ENCODE measurements at regions of chr6 and their contacts with region 1.

Region 1: GRCh38 chr6:46704562-46704961 is 16.9 kb downstream of the TDRD6 start:
- DNase-seq: no peak
- ATAC-seq: peak; percentile 36
- H3K4me3 Mint-ChIP-seq: no peak overlapping the region
- H3K27ac Mint-ChIP-seq: no peak overlapping the region
- H3K4me1 Mint-ChIP-seq: no peaks in the 10 kb centered on the region
- H3K27me3 Mint-ChIP-seq: peaks cover 28% of the 10 kb centered on the region

Region 2: GRCh38 chr6:46606338-46606737 is 98.2 kb before region 1 on chr6:
- CTCF ChIA-PET with region 1: no interaction called
- POLR2A ChIA-PET with region 1: no interaction called
- intact Hi-C with region 1: no loop called
- DNase-seq: no peak
- ATAC-seq: no peak
- H3K4me3 Mint-ChIP-seq: no peak overlapping the region
- H3K27ac Mint-ChIP-seq: no peak overlapping the region
- H3K4me1 Mint-ChIP-seq: no peaks in the 10 kb centered on the region
- H3K27me3 Mint-ChIP-seq: peaks cover 5% of the 10 kb centered on the region

Region 3: DNA sequence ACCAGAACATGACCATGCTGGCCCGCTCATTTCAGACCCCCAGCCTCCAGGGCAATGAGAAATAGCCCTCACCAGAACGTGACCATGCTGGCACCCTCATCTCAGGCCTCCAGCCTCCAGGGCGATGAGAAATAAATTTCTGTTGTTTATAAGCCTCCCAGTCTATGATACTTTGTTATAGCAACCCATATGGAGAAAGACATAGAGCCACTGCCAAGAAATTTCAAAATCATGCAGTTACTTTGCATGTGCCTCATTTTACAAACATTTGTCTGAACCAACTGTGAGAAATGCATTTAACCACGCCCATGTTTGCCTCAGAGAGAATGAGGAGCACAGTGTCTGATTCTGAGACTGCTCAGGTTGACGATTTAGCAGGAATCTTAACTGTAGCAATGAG is 67.4 kb before region 1 on chr6:
- CTCF ChIA-PET with region 1: no interaction called
- POLR2A ChIA-PET with region 1: no interaction called
- intact Hi-C with region 1: no loop called
- DNase-seq: no peak
- ATAC-seq: no peak
- H3K4me3 Mint-ChIP-seq: no peak overlapping the region
- H3K27ac Mint-ChIP-seq: no peak overlapping the region
- H3K4me1 Mint-ChIP-seq: no peaks in the 10 kb centered on the region
- H3K27me3 Mint-ChIP-seq: peaks cover 16% of the 10 kb centered on the region

Region 4: DNA sequence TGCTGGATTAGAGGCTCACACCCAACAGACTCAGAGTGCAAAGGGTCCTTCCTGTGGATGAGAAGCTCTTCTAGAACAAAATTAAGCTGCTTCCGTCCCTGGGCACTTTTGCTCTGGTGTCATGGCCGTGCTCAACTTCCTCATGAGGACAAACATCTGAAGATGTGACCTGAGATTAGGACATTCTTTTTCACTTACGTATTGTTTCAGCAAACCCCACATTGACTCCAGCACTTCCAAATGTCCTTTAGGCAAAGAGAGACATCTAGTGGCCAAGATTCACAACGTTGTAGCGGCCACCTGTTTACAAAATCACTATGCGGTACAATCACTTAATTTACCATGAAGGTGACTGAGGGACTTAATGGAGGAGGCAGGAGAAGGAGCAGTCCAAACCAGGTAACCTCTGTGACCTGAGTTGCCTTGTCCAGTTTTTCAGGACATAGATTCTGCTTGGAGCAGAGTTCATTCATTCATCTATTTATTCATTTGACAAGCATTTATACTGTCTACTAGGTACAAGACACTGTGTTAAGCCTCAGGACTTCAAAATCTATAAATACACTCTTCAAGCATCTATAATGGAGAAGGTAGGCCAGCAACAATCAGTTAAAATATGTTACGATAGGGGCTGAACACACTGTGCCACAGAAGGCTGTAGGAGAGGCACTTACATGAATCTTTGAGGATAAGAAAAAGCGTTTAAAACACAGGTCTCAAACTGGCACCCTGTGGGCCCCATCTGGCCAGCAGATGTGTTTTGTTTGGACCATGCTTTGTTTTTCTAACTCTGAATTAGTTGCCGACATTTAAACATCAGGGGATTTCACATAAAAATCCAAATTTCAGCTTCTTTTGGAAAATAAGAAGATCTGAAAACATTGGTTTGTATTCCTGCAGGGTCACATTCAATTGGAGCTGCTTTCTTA is 343.2 kb after region 1 on chr6:
- CTCF ChIA-PET with region 1: no interaction called
- POLR2A ChIA-PET with region 1: no interaction called
- intact Hi-C with region 1: loop called in 1 of 2 experiments (anchors 5 kb)
- DNase-seq: peak; percentile 42
- ATAC-seq: peak; percentile 72
- H3K4me3 Mint-ChIP-seq: no peak overlapping the region
- H3K27ac Mint-ChIP-seq: no peak overlapping the region
- H3K4me1 Mint-ChIP-seq: peaks cover 2% of the 10 kb centered on the region
- H3K27me3 Mint-ChIP-seq: peaks cover 10% of the 10 kb centered on the region

Region 5: DNA sequence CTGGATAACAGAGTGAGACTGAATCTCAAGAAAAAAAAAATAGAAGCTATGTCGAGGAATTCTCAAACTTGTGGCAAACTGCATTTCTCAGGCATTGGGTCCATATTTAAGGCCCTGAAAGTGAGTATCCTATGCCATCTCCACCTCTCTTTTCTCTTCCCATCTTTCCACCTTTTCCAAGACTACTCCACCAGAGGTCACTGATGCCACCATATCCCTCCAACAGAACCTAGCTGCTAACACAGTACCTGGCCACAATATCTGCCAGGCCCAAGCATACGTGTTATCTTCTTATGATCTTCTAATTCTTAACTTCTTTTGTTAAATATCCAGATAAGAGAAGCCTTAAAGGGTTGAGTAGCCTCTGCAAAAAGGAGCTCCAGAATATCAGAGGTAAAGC is 985.6 kb after region 1 on chr6:
- CTCF ChIA-PET with region 1: no interaction called
- POLR2A ChIA-PET with region 1: no interaction called
- intact Hi-C with region 1: no loop called
- DNase-seq: no peak
- ATAC-seq: no peak
- H3K4me3 Mint-ChIP-seq: no peak overlapping the region
- H3K27ac Mint-ChIP-seq: no peak overlapping the region
- H3K4me1 Mint-ChIP-seq: no peaks in the 10 kb centered on the region
- H3K27me3 Mint-ChIP-seq: peaks cover 2% of the 10 kb centered on the region

Measured in activated CD4-positive, alpha-beta T cell treated with anti-CD3 and anti-CD28 coated beads for 36 hours (primary cell).